ENCODE measurements at regions of chr1 and their contacts with region 1.

Region 1: GRCh38 chr1:52365746-52366516 is at the start of gene CC2D1B:
- DNase-seq: peak; percentile 99
- ATAC-seq: peak; percentile 94
- H3K4me3 Mint-ChIP-seq: peak within 1 kb of the TSS; percentile 94
- H3K27ac Mint-ChIP-seq: peak within 1 kb of the TSS; percentile 93
- H3K4me1 Mint-ChIP-seq: peaks cover 44% of the 10 kb centered on the region
- H3K27me3 Mint-ChIP-seq: no peaks in the 10 kb centered on the region
- total RNA-seq, gene CC2D1B: 22.6 to 25.3 TPM

Region 2: GRCh38 chr1:51616901-51617708 is 748.8 kb before region 1 on chr1 and contains the start of gene OSBPL9:
- CTCF ChIA-PET with region 1: no interaction called
- POLR2A ChIA-PET with region 1: interaction called, 4 read pairs
- intact Hi-C with region 1: loop called in 1 of 2 experiments (anchors 5 kb)
- DNase-seq: peak; percentile 95
- ATAC-seq: peak; percentile 95
- H3K4me3 Mint-ChIP-seq: peak within 1 kb of the TSS; percentile 100
- H3K27ac Mint-ChIP-seq: peak within 1 kb of the TSS; percentile 96
- H3K4me1 Mint-ChIP-seq: peaks cover 33% of the 10 kb centered on the region
- H3K27me3 Mint-ChIP-seq: no peaks in the 10 kb centered on the region
- total RNA-seq, gene OSBPL9: 46.2 to 64.5 TPM

Region 3: DNA sequence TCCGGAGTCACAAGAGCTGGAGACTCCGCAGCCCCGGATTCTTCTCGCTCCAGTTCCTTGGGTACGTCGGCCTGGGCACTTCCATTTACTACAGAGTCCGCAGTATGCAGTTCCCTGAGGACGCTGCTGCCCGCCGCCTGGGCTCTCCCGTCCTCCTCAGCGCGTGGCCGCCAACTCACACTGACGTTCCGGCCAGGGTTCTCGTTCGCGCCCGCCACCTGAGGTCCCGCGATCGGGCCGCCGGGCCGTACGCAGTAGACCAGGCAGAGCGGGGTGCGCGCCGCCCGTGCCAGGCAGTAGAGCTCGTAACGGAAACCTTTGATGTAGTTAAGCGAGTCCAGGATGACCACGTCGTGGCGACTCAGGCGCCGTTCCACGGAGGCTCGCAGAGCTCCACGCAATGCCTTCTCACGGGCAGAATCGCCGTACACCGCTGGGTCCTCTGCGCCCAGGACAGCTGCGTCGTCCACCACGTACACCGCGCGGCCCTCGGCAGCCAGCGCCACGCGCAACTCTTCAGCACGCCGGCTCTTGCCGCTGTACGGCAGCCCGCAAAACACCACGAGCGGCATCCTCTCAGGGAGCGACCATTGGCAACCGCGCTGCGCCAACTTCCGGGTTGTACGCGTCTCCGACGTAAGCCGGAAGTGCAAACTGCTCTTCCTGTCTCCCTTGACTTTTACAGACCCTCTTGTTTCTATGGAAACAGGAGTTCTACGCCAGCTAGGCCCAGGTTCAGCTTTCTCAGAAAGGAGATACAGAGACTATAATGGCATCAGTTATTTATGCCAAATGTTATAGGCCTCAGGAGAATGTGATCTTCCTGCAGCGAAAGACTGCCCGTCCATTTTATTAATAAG is 332.5 kb before region 1 on chr1 and contains the start of gene KTI12:
- CTCF ChIA-PET with region 1: no interaction called
- POLR2A ChIA-PET with region 1: interaction called, 4 read pairs
- intact Hi-C with region 1: loop called in 1 of 2 experiments (anchors 1 kb)
- DNase-seq: peak; percentile 93
- ATAC-seq: peak; percentile 94
- H3K4me3 Mint-ChIP-seq: peak within 1 kb of the TSS; percentile 91
- H3K27ac Mint-ChIP-seq: peak within 1 kb of the TSS; percentile 93
- H3K4me1 Mint-ChIP-seq: peaks cover 32% of the 10 kb centered on the region
- H3K27me3 Mint-ChIP-seq: no peaks in the 10 kb centered on the region
- total RNA-seq, gene KTI12: 7.6 to 12.3 TPM

Region 4: DNA sequence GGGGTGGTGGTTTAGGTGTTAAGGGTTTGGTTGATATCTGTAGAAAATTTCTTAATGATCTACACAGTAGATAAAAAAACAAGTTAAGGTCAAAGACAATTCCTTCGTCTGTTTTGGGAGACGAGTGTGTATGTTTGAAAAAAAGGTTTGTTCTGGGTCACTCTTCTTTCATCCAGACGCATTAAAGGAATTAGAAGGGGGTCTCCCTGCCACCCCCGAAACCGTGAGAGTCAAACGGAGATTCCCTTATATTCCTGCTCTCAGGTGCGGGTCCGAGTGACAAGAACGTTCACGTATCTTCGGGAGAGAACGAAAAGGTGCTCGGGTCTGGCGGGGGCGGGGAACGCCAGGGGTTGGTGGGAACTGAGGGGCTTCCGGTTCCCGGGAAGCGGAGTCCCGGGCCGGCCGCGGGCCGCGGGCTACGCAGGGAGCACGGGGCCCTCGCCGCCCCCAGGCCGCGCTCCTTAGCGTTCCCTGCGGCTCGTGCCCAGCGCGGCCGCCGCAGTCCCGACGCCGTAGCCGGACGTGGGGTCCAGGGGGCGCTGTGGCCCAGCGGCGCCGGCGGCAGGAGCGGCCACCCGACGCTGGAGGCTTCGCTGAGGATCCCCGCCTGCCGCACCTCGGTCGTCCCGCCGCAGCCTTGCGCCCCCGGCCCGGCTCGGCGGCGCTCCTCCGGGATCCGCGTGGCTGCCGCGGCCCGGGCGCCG is 224.3 kb before region 1 on chr1 and contains the start of gene ZFYVE9:
- CTCF ChIA-PET with region 1: no interaction called
- POLR2A ChIA-PET with region 1: interaction called, 3 read pairs
- intact Hi-C with region 1: loop called (anchors 1 to 5 kb)
- DNase-seq: peak; percentile 83
- ATAC-seq: peak; percentile 62
- H3K4me3 Mint-ChIP-seq: peak within 1 kb of the TSS; percentile 80
- H3K27ac Mint-ChIP-seq: peak within 1 kb of the TSS; percentile 84
- H3K4me1 Mint-ChIP-seq: peaks cover 43% of the 10 kb centered on the region
- H3K27me3 Mint-ChIP-seq: peaks cover 9% of the 10 kb centered on the region
- total RNA-seq, gene ZFYVE9: 4.3 to 4.7 TPM

Region 5: GRCh38 chr1:52636721-52637695 is 271.1 kb after region 1 on chr1:
- CTCF ChIA-PET with region 1: no interaction called
- POLR2A ChIA-PET with region 1: no interaction called
- intact Hi-C with region 1: loop called in 1 of 2 experiments (anchors 2 kb)
- DNase-seq: peak; percentile 84
- ATAC-seq: peak; percentile 62
- H3K4me3 Mint-ChIP-seq: peak overlapping the region; percentile 68
- H3K27ac Mint-ChIP-seq: peak overlapping the region; percentile 97
- H3K4me1 Mint-ChIP-seq: peaks cover 74% of the 10 kb centered on the region
- H3K27me3 Mint-ChIP-seq: no peaks in the 10 kb centered on the region

Region 6: DNA sequence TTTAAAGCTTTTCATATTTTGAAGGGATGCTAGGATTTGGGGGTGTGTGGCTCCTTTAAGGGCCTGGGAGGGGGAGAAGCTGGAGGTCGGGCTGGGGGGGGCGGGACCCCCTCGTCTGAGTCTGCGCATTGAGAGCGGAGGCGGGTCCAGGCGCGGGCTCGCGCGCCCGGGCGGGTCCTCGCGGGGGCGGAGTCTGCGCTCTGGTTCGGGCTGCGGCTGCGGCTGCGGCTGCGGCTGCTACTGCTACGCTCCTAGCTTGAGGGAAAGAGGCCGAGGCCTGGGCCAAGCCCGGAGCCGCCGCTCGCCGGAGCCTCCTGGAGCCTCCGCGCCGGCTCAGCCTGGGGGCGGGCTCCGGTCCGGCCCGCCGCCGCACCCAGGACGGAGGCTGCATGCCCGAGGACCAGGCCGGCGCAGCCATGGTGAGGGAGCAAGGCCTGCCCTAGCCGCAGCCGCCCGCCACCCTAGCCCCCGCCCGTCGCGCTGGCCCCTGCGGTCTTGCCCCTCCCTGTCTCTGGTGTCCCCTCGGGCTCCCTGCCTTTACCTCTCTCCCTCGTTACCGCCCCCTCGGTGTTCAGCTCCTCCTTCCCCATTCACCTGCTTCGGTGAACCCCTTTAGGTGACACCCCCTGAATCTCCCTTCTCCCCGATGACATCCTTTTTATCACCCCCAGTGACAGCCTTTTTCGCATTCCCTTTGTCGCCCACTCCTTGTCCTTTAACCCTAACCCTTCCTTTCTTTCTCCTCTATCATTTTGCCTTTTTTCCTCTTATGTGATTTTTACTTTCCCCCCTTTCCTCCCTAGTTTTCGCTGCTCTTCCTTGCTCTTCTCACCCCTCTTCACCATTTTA is 360.6 kb after region 1 on chr1 and contains the start of gene ZYG11B:
- CTCF ChIA-PET with region 1: no interaction called
- POLR2A ChIA-PET with region 1: no interaction called
- intact Hi-C with region 1: loop called in 1 of 2 experiments (anchors 1 kb)
- DNase-seq: peak; percentile 96
- ATAC-seq: peak; percentile 91
- H3K4me3 Mint-ChIP-seq: peak within 1 kb of the TSS; percentile 93
- H3K27ac Mint-ChIP-seq: peak within 1 kb of the TSS; percentile 85
- H3K4me1 Mint-ChIP-seq: peaks cover 32% of the 10 kb centered on the region
- H3K27me3 Mint-ChIP-seq: no peaks in the 10 kb centered on the region
- total RNA-seq, gene ZYG11B: 12.9 to 14.3 TPM

Region 7: GRCh38 chr1:53945433-53946251 is 1579.7 kb after region 1 on chr1 and contains the start of gene IFT25:
- CTCF ChIA-PET with region 1: no interaction called
- POLR2A ChIA-PET with region 1: no interaction called
- intact Hi-C with region 1: loop called in 1 of 2 experiments (anchors 5 kb)
- DNase-seq: peak; percentile 99
- ATAC-seq: peak; percentile 79
- H3K4me3 Mint-ChIP-seq: peak within 1 kb of the TSS; percentile 95
- H3K27ac Mint-ChIP-seq: peak within 1 kb of the TSS; percentile 89
- H3K4me1 Mint-ChIP-seq: peaks cover 50% of the 10 kb centered on the region
- H3K27me3 Mint-ChIP-seq: no peaks in the 10 kb centered on the region
- total RNA-seq, gene IFT25: 56.6 to 62.0 TPM

Measured in activated CD4-positive, alpha-beta T cell treated with anti-CD3 and anti-CD28 coated beads for 36 hours (primary cell).